Right cardiac atrium (tissue), 5 donors: ENCODE measurements at regions of chr17 and their contacts with region 1.

Region 1: DNA sequence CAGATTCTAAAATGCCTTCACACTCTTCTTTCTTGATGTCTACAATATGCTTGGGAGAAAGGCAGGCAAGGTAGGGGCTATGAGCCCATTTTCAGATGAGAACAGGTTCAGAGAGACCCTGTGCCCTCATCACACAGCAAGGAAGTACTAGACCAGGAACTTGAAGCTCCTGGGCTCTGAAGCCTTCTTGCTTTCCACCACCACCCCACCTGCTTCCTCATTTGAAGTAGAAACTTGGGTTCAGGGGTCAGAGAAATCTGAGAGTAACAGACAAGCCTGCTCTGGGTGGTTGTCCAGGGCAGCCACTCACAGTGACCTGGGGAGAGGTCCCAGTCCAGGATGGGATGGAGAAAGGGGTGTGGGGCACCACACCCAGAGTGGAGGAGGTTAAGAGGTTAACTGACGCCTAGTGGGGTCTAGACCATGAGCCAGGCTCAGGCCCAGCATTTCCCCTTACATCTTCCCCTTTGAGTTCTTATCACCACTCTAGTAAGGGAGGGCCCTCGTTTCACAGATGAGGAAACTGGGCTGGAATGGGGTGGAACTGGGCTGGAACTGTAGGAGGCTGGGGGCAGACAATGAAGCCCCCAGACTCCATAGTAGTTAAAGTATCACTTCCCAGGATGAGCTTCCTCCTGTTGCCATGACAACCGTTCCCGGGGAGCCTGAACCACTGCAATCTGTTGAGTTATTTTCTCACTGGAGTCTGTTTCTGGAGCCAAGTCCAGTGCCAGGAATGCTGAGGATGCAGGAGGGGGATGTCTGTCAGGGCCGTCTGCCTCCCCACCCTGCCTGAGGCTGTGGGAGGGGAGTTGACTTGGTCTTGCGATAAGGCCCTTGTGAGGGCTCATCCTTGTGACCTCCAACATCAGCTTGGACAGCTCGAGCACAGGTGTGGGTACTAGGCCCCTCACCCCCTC is 16.2 kb upstream of the PHF12 start:
- DNase-seq: peak in 2 of 3 donors; percentile 26 to 40
- ATAC-seq: no peak
- H3K4me3 ChIP-seq: no peak overlapping the region
- H3K27ac ChIP-seq: no peak overlapping the region
- H3K4me1 ChIP-seq: peaks cover 6% of the 10 kb centered on the region
- H3K27me3 ChIP-seq: no peaks in the 10 kb centered on the region

Region 2: GRCh38 chr17:29069526-29070041 is 102.1 kb after region 1 on chr17:
- intact Hi-C with region 1: loop called in 1 of 4 experiments (anchors 10 kb)
- DNase-seq: peak in 1 of 3 donors; percentile 39
- ATAC-seq: peak; percentile 31 to 37
- H3K4me3 ChIP-seq: no peak overlapping the region
- H3K27ac ChIP-seq: no peak overlapping the region
- H3K4me1 ChIP-seq: peaks cover 6% of the 10 kb centered on the region
- H3K27me3 ChIP-seq: no peaks in the 10 kb centered on the region

Region 3: GRCh38 chr17:29111816-29112499 is 144.5 kb after region 1 on chr17:
- intact Hi-C with region 1: loop called (anchors 2 to 5 kb)
- DNase-seq: peak; percentile 75 to 90 (median 89)
- ATAC-seq: peak; percentile 60 to 69
- H3K4me3 ChIP-seq: no peak overlapping the region
- H3K27ac ChIP-seq: no peak overlapping the region
- H3K4me1 ChIP-seq: peaks cover 8% of the 10 kb centered on the region
- H3K27me3 ChIP-seq: no peaks in the 10 kb centered on the region

Region 4: DNA sequence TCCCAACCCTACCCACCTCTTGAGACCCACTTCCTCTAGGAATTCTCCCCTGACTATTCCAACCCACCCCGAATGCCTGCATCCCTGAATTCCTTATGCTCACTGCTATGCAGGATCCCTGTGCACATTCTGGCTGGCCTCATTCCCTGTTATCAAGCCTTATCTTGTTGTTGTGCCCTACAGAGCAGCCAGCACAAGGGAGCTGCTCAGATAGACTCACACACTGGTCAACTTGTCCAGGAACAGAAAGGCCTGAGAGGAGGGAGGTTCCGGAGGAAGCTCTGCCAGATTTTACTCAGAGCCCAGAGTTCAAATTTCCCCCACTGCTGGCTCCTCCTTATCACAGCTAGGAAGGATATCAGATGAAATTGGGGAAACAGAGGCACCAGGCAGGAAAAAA is 237.6 kb after region 1 on chr17:
- intact Hi-C with region 1: loop called in 1 of 4 experiments (anchors 10 kb)
- DNase-seq: peak in 1 of 3 donors; percentile 60
- ATAC-seq: peak; percentile 94
- H3K4me3 ChIP-seq: no peak overlapping the region
- H3K27ac ChIP-seq: peak overlapping the region; percentile 30
- H3K4me1 ChIP-seq: peaks cover 8% of the 10 kb centered on the region
- H3K27me3 ChIP-seq: no peaks in the 10 kb centered on the region